WTC11 (cell line): ENCODE measurements at regions of chr5 and their contacts with region 1.

Region 1: DNA sequence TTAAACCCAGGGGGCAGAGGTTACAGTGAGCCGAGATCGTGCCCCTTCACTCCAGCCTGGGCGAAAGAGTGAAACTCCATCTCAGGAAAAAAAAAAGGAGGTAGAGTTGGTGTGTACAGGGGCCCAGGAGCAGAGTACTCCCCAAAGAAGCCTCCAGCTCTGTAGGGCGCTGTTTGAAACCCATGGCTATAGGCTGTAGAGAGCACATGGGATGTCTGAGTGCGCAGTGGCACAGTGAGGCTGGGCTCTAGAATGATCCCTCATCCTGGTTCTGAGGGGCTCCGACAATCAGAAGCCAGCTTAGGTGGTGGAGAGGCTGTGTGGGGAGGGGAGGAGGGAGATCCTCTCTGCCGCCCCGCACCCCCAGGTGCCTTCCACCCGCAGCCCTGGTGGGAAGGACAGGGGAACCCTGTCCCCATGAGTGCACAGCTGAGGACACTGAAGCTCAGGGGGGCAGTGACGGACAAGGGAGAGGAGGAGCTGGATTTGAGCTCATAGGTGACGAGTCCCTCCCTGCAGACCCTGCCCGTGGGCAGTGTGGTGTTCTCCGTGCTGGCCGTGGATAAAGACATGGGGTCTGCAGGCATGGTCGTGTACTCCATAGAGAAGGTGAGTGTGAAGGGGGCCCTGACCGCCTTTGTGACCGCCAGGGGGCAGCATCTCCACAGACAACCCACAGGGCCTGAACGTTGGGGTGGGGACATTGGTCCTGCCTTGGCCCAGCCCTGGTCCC is 24.6 kb downstream of the CDHR2 start:
- DNase-seq: peak; percentile 88
- ATAC-seq: peak; percentile 81
- H3K4me3 Mint-ChIP-seq: no peak overlapping the region
- H3K27ac Mint-ChIP-seq: no peak overlapping the region
- H3K4me1 Mint-ChIP-seq: peaks cover 2% of the 10 kb centered on the region
- H3K27me3 Mint-ChIP-seq: peaks cover 10% of the 10 kb centered on the region
- CTCF ChIP-seq: peak; percentile 87

Region 2: GRCh38 chr5:176537608-176538504 is 35.9 kb before region 1 on chr5:
- CTCF ChIA-PET with region 1: interaction called, 10 read pairs
- POLR2A ChIA-PET with region 1: interaction called, 4 read pairs
- DNase-seq: peak; percentile 97
- ATAC-seq: peak; percentile 75
- H3K4me3 Mint-ChIP-seq: peak overlapping the region; percentile 94
- H3K27ac Mint-ChIP-seq: peak overlapping the region; percentile 100
- H3K4me1 Mint-ChIP-seq: peaks cover 71% of the 10 kb centered on the region
- H3K27me3 Mint-ChIP-seq: no peaks in the 10 kb centered on the region
- CTCF ChIP-seq: no peak